Mammary epithelial cell (primary cell): ENCODE measurements at regions of chr9 and their contacts with region 1.

Region 1: DNA sequence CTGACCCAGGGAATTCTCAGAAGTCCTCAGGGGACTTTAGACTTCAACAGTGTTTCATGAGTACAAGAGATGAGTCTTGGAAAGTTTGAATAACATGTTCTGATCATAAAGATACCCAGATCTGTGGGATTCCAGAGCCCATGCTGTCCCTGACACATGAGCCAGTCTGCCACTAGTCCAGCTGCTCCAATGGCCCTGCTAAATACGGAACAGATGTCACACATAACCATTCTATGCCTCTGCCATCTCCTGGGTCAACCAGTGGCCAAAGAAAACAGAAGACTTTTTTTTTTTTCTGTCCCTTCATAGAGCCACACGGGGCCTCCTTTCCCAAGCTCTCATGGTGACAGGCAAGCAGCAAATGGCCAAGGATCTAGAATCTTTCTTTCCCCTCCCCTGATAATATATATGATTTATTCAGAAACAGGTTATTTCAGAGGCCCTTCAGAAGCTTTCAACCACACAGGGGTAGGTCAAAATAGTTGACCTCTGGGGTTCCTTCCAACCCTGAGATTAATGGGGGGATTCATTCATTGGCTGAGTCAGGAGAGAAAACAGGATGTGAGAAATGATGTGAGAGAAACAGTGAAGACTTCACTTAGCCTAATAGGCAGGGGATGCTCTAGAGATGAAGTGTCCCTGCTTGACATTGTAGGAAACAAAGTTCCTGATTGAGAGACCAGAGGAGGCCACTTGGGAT is 367.7 kb downstream of the CDK5RAP2 start:
- DNase-seq: no peak
- H3K4me3 ChIP-seq: no peak overlapping the region
- H3K27ac ChIP-seq: no peak overlapping the region
- H3K4me1 ChIP-seq: no peaks in the 10 kb centered on the region
- H3K27me3 ChIP-seq: no peaks in the 10 kb centered on the region
- CTCF ChIP-seq: no peak

Region 2: DNA sequence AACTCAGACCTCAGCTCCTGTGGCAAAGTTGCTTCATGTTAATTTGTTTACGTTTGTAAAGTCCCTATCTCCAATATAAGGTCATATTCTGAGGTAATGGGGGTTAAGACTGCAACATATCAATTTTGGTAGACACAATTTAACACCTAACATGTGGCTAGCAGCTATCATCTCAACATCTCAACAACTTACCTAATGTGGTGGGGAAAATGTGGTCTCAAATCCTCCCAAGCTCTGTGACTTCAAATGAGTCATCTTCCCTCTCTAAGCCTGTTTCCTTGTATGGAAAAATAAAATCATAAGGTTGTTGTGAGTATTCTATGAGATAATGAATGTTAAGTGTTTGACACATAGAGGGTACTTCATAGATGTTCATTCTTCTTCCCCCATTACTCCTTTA is 75.6 kb before region 1 on chr9:
- CTCF ChIA-PET with region 1: no interaction called
- dilution Hi-C with region 1: no loop called
- in situ Hi-C with region 1: no loop called
- intact Hi-C with region 1: no loop called
- DNase-seq: no peak
- H3K4me3 ChIP-seq: no peak overlapping the region
- H3K27ac ChIP-seq: no peak overlapping the region
- H3K4me1 ChIP-seq: no peaks in the 10 kb centered on the region
- H3K27me3 ChIP-seq: no peaks in the 10 kb centered on the region
- CTCF ChIP-seq: no peak

Region 3: DNA sequence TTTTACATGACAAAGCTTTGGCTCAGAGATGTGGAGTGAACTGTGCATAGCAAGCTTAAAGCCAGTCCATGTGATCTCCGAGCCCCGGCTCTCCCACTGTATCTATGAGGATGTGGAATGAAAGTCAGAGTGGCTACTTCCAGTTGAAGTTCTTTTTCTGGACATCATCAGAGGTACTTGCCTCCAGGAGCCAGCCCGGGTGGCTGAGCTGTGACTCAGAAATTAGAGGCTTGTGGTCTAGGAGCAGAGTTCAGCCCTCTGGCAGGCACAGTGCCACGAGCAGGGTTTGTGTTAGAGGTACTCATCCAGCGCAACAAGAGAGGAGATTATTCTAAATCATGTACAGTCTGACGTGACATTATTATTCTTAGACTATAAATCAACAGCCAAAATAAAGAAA is 45.2 kb after region 1 on chr9:
- CTCF ChIA-PET with region 1: no interaction called
- dilution Hi-C with region 1: loop called (anchors 5 kb)
- in situ Hi-C with region 1: no loop called
- intact Hi-C with region 1: no loop called
- DNase-seq: peak; percentile 42
- H3K4me3 ChIP-seq: no peak overlapping the region
- H3K27ac ChIP-seq: no peak overlapping the region
- H3K4me1 ChIP-seq: no peaks in the 10 kb centered on the region
- H3K27me3 ChIP-seq: no peaks in the 10 kb centered on the region
- CTCF ChIP-seq: no peak